Thyroid gland (tissue), 4 donors: ENCODE measurements at regions of chr19 and their contacts with region 1.

Region 1: GRCh38 chr19:4638828-4639530 is at the start of gene TNFAIP8L1:
- DNase-seq: peak; percentile 93 to 94
- H3K4me3 ChIP-seq: peak within 1 kb of the TSS in 1 of 3 donors; percentile 45
- H3K27ac ChIP-seq: peak within 1 kb of the TSS; percentile 8 to 68 (median 49)
- H3K4me1 ChIP-seq: peaks cover 8 to 16% of the 10 kb centered on the region in 2 donors
- H3K27me3 ChIP-seq: no peaks in the 10 kb centered on the region
- CTCF ChIP-seq: no peak
- POLR2A ChIP-seq: peak in 1 of 2 donors; percentile 7
- total RNA-seq, gene TNFAIP8L1: 3.8 to 9.5 (median 7.8) TPM

Region 2: GRCh38 chr19:4557971-4558941 is 80.7 kb before region 1 on chr19:
- intact Hi-C with region 1: loop called (anchors 5 kb)
- DNase-seq: peak in 1 of 2 donors; percentile 20
- H3K4me3 ChIP-seq: peak overlapping the region in 1 of 3 donors; percentile 13
- H3K27ac ChIP-seq: no peak overlapping the region
- H3K4me1 ChIP-seq: no peaks in the 10 kb centered on the region
- H3K27me3 ChIP-seq: no peaks in the 10 kb centered on the region
- CTCF ChIP-seq: peak in 5 of 6 experiments; percentile 66 to 100 (median 94)
- POLR2A ChIP-seq: no peak

Region 3: DNA sequence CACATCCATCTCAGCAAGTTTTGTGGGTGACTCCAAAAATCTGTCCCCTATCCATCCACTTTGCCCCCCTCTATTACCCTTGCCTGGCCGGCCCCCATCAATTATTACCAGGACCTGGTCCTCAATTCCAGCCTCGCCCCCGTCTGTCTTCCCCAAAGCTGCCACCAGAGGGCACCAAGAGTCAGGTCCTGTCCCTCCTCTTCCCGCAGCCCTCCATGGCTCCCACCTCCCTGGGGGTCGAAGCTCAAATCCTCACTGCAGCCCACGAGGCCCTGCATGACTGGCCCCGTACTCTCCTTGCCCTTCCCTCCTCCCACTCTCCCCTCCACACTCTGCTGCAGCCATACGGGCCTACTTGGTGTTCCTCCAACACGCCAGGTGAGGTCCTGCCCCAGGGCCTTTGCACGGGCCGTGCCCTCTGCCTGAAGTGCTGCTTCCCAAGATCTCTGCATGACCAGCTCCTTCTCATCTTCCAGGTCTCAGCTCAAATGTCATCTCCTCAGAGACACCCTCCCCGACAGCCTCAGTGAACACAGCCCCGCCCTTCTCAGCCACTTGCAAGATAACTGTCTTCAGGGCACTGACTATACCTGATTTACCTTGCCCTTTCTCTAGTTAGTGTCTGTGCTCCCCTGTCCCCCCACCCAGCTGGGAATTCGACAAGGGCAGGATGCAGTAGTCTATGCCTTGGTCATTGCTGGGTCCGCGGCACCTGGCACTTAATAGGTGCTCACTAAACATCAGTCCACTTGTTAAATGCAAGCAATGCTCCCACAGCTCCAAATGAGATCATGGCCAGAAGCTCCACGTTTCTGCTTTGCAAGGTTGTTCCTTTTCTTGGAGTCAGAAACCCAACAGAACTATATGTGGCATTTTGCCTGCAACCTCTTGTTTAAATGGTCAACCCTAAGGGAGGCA is 62.7 kb before region 1 on chr19:
- intact Hi-C with region 1: loop called (anchors 5 kb)
- DNase-seq: peak; percentile 48 to 52
- H3K4me3 ChIP-seq: no peak overlapping the region
- H3K27ac ChIP-seq: peak overlapping the region in 1 of 3 donors; percentile 69
- H3K4me1 ChIP-seq: peaks cover 0 to 8% of the 10 kb centered on the region in 2 donors
- H3K27me3 ChIP-seq: peaks cover 14% of the 10 kb centered on the region
- CTCF ChIP-seq: peak in 5 of 6 experiments; percentile 20 to 65 (median 57)
- POLR2A ChIP-seq: no peak